ENCODE measurements at regions of chr14 and their contacts with region 1.

Region 1: GRCh38 chr14:100108042-100108825 is 43.0 kb downstream of the EVL start:
- DNase-seq: peak; percentile 56 to 83
- H3K4me3 ChIP-seq: no peak overlapping the region
- H3K27ac ChIP-seq: peak overlapping the region; percentile 22 to 29
- H3K4me1 ChIP-seq: peaks cover 0 to 28% of the 10 kb centered on the region in 2 donors
- H3K27me3 ChIP-seq: no peaks in the 10 kb centered on the region
- CTCF ChIP-seq: peak; percentile 70 to 84 (median 80)
- POLR2A ChIP-seq: no peak

Region 2: DNA sequence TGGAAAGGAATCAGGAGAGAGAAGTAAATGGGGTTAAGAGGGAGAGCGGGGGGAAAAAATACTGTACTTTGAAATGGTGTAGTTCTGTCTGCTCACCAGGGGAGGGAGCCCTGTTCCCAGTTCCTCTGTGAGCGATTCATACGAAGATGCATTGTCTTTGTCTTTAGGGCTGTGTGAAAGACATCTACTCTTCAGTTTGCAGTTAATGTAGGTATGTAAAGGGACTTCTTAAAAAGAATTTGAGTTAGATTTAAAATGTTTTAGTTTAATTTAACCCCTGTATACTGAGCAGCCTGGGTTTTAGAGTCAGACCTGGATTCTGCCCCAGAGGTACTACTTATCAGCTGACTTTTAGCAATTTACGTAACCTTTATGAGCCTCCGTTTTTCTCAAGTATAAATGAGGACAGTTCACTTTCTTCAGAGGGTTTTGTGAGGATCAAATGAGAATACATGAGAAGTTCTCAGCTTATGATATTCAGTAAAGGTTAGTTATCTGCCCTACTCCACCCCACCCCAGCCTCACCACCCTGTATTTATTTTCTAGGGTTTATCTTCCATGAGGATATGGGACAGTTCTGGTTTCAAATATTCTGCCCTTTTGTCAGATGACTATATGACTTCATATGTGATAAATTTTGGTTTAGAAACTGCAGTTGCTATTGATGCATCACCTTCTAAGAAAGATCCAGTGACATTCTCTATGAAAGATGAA is 125.5 kb before region 1 on chr14:
- intact Hi-C with region 1: loop called (anchors 5 kb)
- DNase-seq: no peak
- H3K4me3 ChIP-seq: no peak overlapping the region
- H3K27ac ChIP-seq: no peak overlapping the region
- H3K4me1 ChIP-seq: no peaks in the 10 kb centered on the region
- H3K27me3 ChIP-seq: no peaks in the 10 kb centered on the region
- CTCF ChIP-seq: peak; percentile 91 to 94 (median 92)
- POLR2A ChIP-seq: no peak

Region 3: DNA sequence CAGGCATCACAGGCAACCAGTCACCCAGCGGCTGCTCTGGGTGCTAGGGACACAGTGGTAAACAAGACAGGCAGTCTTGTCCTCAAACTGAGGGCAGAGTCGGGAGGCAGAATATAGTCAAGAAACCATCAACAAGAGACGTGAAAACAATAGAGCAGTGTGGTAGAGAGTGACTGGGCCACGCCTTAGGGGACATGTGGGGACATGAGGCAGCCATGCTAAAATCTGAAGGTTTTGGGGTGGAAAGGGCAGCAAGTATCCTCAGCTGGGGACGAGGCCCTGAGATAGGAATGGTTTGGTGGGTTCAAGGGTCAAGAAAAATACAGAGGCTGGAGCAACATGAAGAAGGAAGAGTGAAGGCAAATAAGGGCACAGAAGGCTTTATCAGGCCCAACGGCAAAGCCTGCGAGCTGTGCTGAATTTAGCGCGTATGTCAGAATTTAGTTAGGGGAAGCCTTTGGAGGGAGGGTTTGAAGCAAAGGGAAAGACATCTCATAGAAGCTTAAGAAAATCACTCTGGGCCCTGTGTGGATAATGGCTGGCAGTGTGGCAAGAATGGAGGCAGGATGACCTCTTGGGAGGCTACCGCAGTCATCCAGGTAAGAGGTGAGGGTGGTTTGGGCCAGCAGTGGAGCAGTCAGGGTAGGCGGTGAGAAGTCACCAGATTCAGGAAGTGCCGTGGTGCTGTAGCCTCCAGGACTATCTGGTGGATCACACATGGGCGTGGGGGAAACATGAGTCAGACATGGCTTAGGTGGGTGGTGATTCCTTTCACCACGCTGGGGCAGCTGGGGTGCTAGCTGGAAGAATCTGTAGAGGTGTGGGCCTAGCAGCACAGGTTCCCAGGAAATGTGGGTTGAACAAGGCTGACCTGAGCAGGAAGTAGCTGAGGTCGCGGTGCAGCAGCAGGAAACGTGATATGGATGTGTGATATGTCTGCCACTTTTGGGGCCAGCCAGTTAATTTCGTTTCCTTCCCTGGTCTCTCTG is 40.0 kb before region 1 on chr14:
- intact Hi-C with region 1: no loop called
- DNase-seq: peak in 1 of 2 donors; percentile 33
- H3K4me3 ChIP-seq: peak overlapping the region in 1 of 3 donors; percentile 25
- H3K27ac ChIP-seq: peak overlapping the region; percentile 70 to 76
- H3K4me1 ChIP-seq: peaks cover 0 to under 1% of the 10 kb centered on the region in 2 donors
- H3K27me3 ChIP-seq: no peaks in the 10 kb centered on the region
- CTCF ChIP-seq: no peak
- POLR2A ChIP-seq: no peak

Region 4: DNA sequence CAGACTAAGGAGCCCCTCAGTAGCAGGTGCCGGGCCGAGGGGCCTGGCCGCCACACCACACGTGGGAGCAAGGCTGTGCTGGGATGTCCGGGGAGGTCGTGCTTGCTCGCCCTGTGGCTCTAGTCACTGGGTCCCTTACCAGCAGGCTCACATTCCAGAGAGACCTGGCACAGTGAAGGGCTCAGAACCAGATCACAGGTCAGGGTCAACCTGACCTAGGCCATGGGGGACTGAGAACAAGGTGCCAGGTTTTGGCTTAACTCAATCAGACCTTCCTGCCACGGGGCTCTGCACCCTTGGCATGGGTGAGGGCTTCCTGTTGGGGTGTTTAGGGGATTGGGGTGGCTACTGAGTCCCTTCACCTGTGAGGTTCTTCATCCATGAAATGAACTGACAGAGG is 28.9 kb after region 1 on chr14:
- intact Hi-C with region 1: loop called (anchors 1 kb)
- DNase-seq: no peak
- H3K4me3 ChIP-seq: no peak overlapping the region
- H3K27ac ChIP-seq: no peak overlapping the region
- H3K4me1 ChIP-seq: peaks cover 0 to 4% of the 10 kb centered on the region in 2 donors
- H3K27me3 ChIP-seq: no peaks in the 10 kb centered on the region
- CTCF ChIP-seq: no peak
- POLR2A ChIP-seq: no peak